K562 (cell line): ENCODE measurements at regions of chr22 and their contacts with region 1.

Region 1: DNA sequence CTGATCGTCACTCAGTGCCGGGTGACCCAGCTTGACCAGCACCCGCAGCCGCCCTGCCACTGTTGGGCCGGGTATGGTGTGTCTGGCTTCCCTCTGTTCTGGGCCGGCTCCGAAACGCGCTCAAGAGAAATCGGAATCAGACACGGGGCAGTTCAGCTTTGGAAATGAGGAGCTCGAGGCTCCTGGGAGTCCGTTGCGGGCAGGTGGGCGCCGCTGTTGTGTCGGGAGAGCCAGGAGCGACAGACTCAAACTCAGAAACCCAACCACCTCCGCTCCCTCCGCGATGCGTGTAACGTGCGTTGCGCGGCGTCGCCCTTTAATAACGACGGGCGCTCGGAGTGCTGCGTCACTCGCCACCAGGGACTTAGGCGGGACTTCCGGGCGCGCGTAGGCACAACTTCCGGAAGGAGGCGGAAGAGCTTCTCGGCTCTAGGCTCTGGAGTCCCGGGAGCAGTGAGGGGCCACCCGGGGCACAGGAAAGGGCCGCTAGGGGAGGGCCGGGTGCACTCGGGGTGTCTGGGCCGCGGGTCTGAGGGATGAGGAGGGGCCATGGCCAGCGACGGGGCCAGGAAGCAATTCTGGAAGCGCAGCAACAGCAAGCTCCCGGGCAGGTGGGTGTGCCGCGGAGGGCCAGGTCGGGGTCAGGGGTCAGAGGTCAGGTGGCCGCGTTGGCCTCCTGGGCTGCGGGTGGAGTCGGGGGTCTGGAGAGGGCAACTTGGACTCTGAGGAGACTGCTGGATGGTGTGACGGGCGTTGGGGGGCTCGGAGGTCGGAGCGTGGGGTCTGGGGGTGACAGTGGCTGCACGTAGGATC is at the start of gene TBC1D22A:
- DNase-seq: peak; percentile 85 to 94 (median 88)
- ATAC-seq: peak; percentile 93
- H3K4me3 ChIP-seq: peak within 1 kb of the TSS; percentile 90
- H3K27ac ChIP-seq: peak within 1 kb of the TSS; percentile 92
- H3K4me1 ChIP-seq: peaks cover 5 to 10% of the 10 kb centered on the region in 2 experiments; a peak in 4 of 5 replicates
- H3K27me3 ChIP-seq: no peaks in the 10 kb centered on the region
- CTCF ChIP-seq: no peak
- EP300 ChIP-seq: no peak
- POLR2A ChIP-seq: peak; percentile 96
- RAD21 ChIP-seq: no peak
- polyA plus RNA-seq, gene TBC1D22A: 0.20 to 0.34 TPM

Region 2: GRCh38 chr22:46213052-46213451 is 549.4 kb before region 1 on chr22:
- CTCF ChIA-PET with region 1: no interaction called
- POLR2A ChIA-PET with region 1: no interaction called
- in situ Hi-C with region 1: no loop called
- intact Hi-C with region 1: no loop called
- DNase-seq: no peak
- ATAC-seq: no peak
- H3K4me3 ChIP-seq: no peak overlapping the region
- H3K27ac ChIP-seq: no peak overlapping the region
- H3K4me1 ChIP-seq: no peaks in the 10 kb centered on the region
- H3K27me3 ChIP-seq: no peaks in the 10 kb centered on the region
- CTCF ChIP-seq: no peak
- EP300 ChIP-seq: no peak
- POLR2A ChIP-seq: no peak
- RAD21 ChIP-seq: no peak

Region 3: GRCh38 chr22:46587492-46588278 is 174.8 kb before region 1 on chr22:
- CTCF ChIA-PET with region 1: no interaction called
- POLR2A ChIA-PET with region 1: no interaction called
- in situ Hi-C with region 1: no loop called
- intact Hi-C with region 1: no loop called
- DNase-seq: no peak
- ATAC-seq: no peak
- H3K4me3 ChIP-seq: no peak overlapping the region
- H3K27ac ChIP-seq: no peak overlapping the region
- H3K4me1 ChIP-seq: peaks cover 9 to 69% of the 10 kb centered on the region in 2 experiments; a peak in 4 of 5 replicates
- H3K27me3 ChIP-seq: no peaks in the 10 kb centered on the region
- CTCF ChIP-seq: no peak
- EP300 ChIP-seq: no peak
- POLR2A ChIP-seq: no peak
- RAD21 ChIP-seq: no peak

Region 4: GRCh38 chr22:46739094-46739870 is 23.2 kb before region 1 on chr22:
- CTCF ChIA-PET with region 1: no interaction called
- POLR2A ChIA-PET with region 1: interaction called, 21 read pairs
- in situ Hi-C with region 1: no loop called
- intact Hi-C with region 1: no loop called
- DNase-seq: peak in 2 of 4 experiments; percentile 21 to 22
- ATAC-seq: no peak
- H3K4me3 ChIP-seq: no peak overlapping the region
- H3K27ac ChIP-seq: no peak overlapping the region
- H3K4me1 ChIP-seq: peaks cover 5 to 35% of the 10 kb centered on the region in 2 experiments; a peak in 4 of 5 replicates
- H3K27me3 ChIP-seq: no peaks in the 10 kb centered on the region
- CTCF ChIP-seq: no peak
- EP300 ChIP-seq: no peak
- POLR2A ChIP-seq: no peak
- RAD21 ChIP-seq: no peak

Region 5: DNA sequence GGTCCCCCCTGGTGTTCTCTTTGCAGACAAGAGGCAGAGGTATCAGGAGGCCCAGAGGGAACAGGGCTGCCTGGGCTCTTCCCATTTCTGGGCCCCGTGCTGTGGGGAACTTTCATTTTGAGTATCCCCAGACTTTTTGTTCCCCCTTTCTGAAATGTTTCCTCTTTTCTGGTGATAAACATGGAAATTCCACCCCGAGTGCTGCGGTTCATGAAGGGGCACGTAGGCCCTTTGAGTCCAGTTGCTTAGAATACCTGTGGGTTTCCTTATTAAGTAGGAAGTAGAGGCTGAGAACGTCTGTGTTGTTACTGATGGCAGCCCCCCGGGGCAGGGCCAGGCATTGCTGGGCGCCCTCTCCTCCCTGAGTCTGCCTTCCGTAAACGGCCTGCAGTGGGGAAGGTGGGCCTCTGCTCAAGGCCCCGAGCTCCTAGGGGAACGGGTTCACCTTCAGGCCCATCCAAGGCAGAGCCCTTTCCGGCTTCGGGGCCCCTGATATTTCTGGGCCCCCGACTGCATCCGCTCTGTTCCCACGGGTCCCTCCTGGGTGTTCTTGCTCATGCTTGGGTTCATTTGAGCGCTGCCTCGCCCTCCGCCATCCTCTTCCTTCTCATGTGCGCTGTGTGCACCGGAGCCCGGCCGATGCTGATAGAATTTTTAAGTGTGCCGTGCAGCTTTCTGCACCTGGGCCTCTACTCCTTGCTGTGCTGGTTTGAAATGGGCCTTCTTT is 12.0 kb after region 1 on chr22:
- CTCF ChIA-PET with region 1: no interaction called
- POLR2A ChIA-PET with region 1: interaction called, 23 read pairs
- in situ Hi-C with region 1: no loop called
- intact Hi-C with region 1: no loop called
- DNase-seq: no peak
- ATAC-seq: no peak
- H3K4me3 ChIP-seq: no peak overlapping the region
- H3K27ac ChIP-seq: no peak overlapping the region
- H3K4me1 ChIP-seq: peaks cover 24 to 49% of the 10 kb centered on the region in 2 experiments
- H3K27me3 ChIP-seq: no peaks in the 10 kb centered on the region
- CTCF ChIP-seq: no peak
- EP300 ChIP-seq: no peak
- POLR2A ChIP-seq: no peak
- RAD21 ChIP-seq: no peak